Activated CD4-positive, alpha-beta T cell treated with anti-CD3 and anti-CD28 coated beads, Interleukin-2, amount 10 ng/mL, durations not matched to agents 7 days and 5 days (primary cell): ENCODE measurements at regions of chr7 and their contacts with region 1.

Region 1: GRCh38 chr7:138738551-138739335 is 37.6 kb upstream of the SVOPL start:
- DNase-seq: peak; percentile 87
- H3K4me3 Mint-ChIP-seq: no peak overlapping the region
- H3K27ac Mint-ChIP-seq: no peak overlapping the region
- H3K4me1 Mint-ChIP-seq: peaks cover 7% of the 10 kb centered on the region
- H3K27me3 Mint-ChIP-seq: no peaks in the 10 kb centered on the region

Region 2: DNA sequence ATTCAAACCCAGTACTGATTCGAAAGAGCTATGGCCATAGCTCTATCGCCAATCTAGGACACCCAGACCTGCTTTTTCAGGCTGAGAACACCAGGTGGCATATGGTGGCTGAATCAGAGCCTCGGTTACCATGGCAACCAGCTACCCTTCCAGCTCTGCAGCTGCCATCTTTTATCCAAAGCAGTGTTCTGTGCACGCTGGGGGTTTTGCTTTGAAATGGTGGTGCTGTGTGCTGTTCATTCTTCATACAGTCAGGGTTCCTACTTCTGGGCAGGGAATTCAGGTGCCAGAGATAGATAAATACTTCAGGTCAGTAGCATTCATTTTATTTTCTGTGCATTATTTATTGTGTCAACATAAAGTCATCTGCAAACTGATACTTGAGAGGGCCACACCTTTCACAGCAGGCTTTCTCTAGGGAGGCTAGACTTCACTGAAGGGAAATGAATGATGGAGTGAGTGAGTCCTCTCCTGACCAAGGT is 577.1 kb before region 1 on chr7:
- CTCF ChIA-PET with region 1: interaction called, 10 read pairs
- POLR2A ChIA-PET with region 1: no interaction called
- DNase-seq: peak; percentile 86
- H3K4me3 Mint-ChIP-seq: no peak overlapping the region
- H3K27ac Mint-ChIP-seq: no peak overlapping the region
- H3K4me1 Mint-ChIP-seq: no peaks in the 10 kb centered on the region
- H3K27me3 Mint-ChIP-seq: no peaks in the 10 kb centered on the region

Region 3: DNA sequence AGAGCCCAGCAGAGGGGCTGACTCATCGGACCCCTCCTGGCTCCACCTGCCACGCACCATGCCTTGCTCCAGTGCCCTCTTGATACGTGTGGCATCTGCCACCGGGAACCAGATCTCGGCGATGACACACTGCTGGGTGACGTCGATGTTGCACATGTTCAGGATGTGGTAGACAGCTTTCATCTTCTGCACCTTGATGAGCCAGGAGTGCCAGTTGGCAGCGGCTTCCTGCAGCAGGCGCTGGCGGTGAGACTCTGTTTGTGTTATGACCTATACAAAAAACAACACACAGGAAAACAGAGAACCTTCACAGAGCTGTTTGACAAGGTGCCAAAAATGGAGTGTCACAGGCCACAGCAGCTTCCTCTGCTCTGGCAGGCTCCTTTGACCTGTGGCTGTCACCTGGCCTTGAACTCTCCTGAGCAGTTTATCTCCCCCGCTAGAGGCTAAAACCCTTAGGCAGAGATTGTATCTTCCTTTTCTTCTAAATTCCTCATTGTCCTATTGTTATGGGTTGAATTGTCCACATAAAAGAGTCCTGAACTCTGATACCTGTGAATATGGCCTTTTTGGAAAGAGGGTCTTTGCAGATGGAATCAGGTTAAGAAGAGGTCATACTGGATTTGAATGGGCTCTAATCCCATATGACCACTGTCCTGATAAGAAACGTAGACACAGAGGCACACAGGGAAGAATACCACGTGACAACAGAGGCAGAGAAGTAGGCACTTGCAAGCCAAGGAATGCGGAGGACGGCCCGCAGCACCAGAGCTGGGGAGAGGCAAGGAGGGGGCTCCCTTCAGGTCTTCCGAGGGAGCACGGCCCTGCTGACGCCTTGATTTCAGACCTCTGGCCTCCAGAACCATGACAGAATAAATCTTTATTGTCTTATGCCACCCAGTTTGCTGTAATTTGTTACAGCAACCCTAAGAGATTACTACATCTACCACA is 14.1 kb after region 1 on chr7:
- CTCF ChIA-PET with region 1: interaction called, 23 read pairs
- POLR2A ChIA-PET with region 1: interaction called, 3 read pairs
- DNase-seq: peak; percentile 97
- H3K4me3 Mint-ChIP-seq: peak overlapping the region; percentile 35
- H3K27ac Mint-ChIP-seq: peak overlapping the region; percentile 93
- H3K4me1 Mint-ChIP-seq: peaks cover 77% of the 10 kb centered on the region
- H3K27me3 Mint-ChIP-seq: no peaks in the 10 kb centered on the region

Region 4: DNA sequence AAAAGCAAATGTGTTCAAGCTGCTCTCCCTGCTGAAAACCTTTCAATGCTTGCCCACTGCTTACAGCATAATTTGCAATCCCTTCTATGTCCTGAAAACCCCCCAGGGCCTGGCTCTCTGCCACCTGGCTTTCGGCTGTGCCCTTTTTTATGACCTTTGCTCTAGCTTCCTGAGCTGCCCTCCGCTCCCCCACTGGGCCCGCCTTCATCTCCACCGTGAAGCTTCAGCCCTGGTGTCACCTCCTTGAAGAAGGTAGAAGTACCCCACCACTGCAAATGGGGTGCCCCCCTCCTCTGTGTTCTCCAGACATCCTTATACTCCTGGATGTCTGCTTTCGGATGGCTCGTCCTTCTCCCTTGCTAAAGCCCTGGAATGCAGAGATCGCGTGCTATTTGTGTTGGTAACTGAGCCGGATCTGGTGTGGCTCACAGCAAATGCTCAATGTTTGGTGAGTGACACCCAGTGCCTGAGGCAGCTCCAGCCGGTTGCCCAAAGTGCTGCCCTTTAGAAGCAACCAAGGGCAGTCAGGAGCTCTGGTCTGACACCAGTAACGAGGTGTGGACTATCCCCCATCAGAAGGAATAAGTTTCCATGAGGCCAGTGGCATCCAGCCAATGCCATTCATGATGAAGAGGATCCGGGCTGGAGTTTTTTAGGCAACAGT is 152.2 kb after region 1 on chr7:
- CTCF ChIA-PET with region 1: no interaction called
- POLR2A ChIA-PET with region 1: no interaction called
- DNase-seq: no peak
- H3K4me3 Mint-ChIP-seq: no peak overlapping the region
- H3K27ac Mint-ChIP-seq: peak overlapping the region; percentile 20
- H3K4me1 Mint-ChIP-seq: peaks cover 14% of the 10 kb centered on the region
- H3K27me3 Mint-ChIP-seq: peaks cover 16% of the 10 kb centered on the region